Psoas muscle (tissue), 8 donors: ENCODE measurements at regions of chr14 and their contacts with region 1.

Region 1: GRCh38 chr14:21383848-21384493 is at the start of gene SUPT16H:
- DNase-seq: peak; percentile 96 to 98
- ATAC-seq: peak; percentile 97 to 99 (median 99)
- H3K4me3 ChIP-seq: peak within 1 kb of the TSS; percentile 82
- H3K27ac ChIP-seq: peak within 1 kb of the TSS; percentile 90
- H3K4me1 ChIP-seq: peaks cover 25% of the 10 kb centered on the region
- H3K27me3 ChIP-seq: no peaks in the 10 kb centered on the region
- CTCF ChIP-seq: no peak
- total RNA-seq, gene SUPT16H: 23.6 to 29.2 (median 26.8) TPM

Region 2: GRCh38 chr14:21220874-21221477 is 163.0 kb before region 1 on chr14:
- intact Hi-C with region 1: no loop called
- DNase-seq: no peak
- ATAC-seq: no peak
- H3K4me3 ChIP-seq: no peak overlapping the region
- H3K27ac ChIP-seq: no peak overlapping the region
- H3K4me1 ChIP-seq: peaks cover 41% of the 10 kb centered on the region
- H3K27me3 ChIP-seq: no peaks in the 10 kb centered on the region
- CTCF ChIP-seq: no peak

Region 3: DNA sequence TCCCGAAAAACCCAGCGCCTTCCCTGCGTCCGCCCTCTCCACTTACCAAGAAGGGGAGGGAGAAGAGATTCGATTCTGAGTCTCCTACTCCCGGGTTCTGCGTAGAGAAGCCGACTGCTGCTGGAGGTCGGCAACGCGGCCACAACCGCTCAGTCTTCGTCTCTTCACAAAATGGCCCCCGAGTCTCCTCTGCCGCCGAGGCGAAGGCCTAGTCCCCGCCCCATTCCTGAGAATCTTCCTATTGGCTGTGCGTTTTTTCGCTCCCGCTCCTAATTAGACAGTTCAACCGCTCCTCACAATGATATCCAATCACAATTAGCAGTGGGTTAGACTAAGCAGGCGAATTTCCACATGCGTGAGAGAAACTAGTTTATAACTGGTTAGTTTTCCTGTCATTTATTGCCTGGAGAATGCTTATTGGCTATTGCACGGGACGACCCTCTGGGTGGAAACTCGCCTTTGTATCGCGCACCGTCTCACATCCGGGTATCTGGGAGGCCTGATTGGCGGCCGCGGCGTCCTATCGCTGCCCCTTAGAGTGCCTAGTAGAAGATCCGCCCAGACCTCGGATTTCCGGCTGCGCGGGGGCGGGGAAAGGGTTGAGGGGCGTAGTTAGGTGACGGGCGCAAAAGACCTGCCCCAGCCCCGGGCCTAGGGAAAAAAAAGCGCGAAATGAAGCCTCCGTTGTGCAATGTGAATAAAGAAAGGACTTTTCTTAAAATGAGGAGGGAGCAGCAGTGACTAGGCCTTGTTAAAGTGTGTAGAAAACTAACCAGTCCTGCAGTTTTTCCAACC is 114.5 kb before region 1 on chr14 and contains the start of gene HNRNPC:
- intact Hi-C with region 1: loop called in 1 of 2 experiments (anchors 10 kb)
- DNase-seq: peak; percentile 100
- ATAC-seq: peak; percentile 94 to 98 (median 97)
- H3K4me3 ChIP-seq: peak within 1 kb of the TSS; percentile 97
- H3K27ac ChIP-seq: peak within 1 kb of the TSS; percentile 98
- H3K4me1 ChIP-seq: peaks cover 33% of the 10 kb centered on the region
- H3K27me3 ChIP-seq: no peaks in the 10 kb centered on the region
- CTCF ChIP-seq: no peak
- total RNA-seq, gene HNRNPC: 217 to 310 (median 245) TPM

Region 4: DNA sequence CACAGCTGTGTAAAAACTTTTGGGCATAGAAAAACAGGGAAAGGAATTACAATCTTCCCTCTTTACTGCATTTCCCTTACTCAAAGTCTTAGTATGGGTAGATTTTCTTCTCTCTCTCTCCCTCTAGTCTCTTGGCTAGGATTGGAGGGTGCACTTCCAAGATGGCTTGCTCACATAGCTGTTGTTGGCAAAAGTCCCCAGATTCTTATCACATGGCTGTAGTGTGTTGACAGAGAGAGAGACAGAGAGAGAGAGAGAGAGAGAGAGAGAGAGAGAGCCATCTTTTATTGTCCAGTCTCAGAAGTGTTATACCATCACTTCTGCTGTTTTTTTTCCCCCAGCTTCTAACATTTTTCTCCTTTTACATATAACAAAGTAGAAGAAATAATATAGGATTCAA is 263.4 kb after region 1 on chr14:
- intact Hi-C with region 1: no loop called
- DNase-seq: no peak
- ATAC-seq: no peak
- H3K4me3 ChIP-seq: no peak overlapping the region
- H3K27ac ChIP-seq: no peak overlapping the region
- H3K4me1 ChIP-seq: no peaks in the 10 kb centered on the region
- H3K27me3 ChIP-seq: no peaks in the 10 kb centered on the region
- CTCF ChIP-seq: no peak